ENCODE measurements at regions of chr7 and their contacts with region 1.

Region 1: GRCh38 chr7:44885394-44886317 is at the start of gene PURB:
- DNase-seq: peak; percentile 97 to 98
- H3K4me3 ChIP-seq: peak within 1 kb of the TSS; percentile 77
- H3K27ac ChIP-seq: peak within 1 kb of the TSS; percentile 96
- H3K4me1 ChIP-seq: peaks cover 44% of the 10 kb centered on the region
- H3K27me3 ChIP-seq: no peaks in the 10 kb centered on the region
- CTCF ChIP-seq: no peak
- total RNA-seq, gene PURB: 33.1 and 38.2 TPM in 2 replicates

Region 2: GRCh38 chr7:44914992-44915607 is 29.4 kb after region 1 on chr7:
- CTCF ChIA-PET with region 1: no interaction called
- POLR2A ChIA-PET with region 1: interaction called, 17 read pairs
- intact Hi-C with region 1: loop called (anchors 1 kb)
- DNase-seq: no peak
- H3K4me3 ChIP-seq: no peak overlapping the region
- H3K27ac ChIP-seq: no peak overlapping the region
- H3K4me1 ChIP-seq: peaks cover 23% of the 10 kb centered on the region
- H3K27me3 ChIP-seq: no peaks in the 10 kb centered on the region
- CTCF ChIP-seq: no peak

Region 3: DNA sequence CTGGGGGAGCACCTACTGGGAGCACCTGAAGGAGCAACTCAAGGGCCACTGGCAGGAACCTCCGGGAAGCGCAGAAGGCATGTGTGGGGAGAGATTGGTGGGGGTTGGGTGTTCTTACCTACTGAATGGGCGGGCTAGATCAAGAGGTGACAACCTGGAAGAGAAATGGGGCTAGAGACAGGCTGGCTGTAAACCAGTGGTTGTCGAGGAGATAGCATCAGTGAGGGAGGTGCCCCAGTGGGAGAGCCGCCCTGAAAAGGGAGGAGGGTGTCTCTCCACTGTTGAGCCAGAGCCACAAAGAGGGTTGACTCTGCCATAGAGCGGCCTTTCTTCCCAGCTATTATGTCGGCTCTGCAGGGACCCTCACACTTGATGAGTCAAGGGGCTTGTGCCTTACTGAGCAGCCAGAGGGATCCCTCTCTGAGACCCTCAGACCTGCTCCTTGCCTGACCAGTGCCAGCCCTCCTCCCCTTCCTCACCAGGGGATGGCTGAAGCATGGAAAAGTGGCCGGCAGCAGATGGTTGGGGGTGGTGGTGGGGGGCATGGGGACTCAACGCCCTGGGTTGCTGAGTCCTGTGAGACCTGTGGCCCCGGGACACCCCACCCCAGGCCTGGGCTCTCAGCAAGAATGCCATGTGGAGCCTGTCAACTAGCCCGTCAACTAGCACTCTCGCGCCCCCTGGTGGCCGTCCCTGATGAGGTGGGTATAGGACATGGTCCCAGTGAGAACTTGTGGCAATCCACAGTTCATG is 36.1 kb after region 1 on chr7:
- CTCF ChIA-PET with region 1: no interaction called
- POLR2A ChIA-PET with region 1: interaction called, 17 read pairs
- intact Hi-C with region 1: no loop called
- DNase-seq: peak; percentile 61 to 82
- H3K4me3 ChIP-seq: no peak overlapping the region
- H3K27ac ChIP-seq: no peak overlapping the region
- H3K4me1 ChIP-seq: no peaks in the 10 kb centered on the region
- H3K27me3 ChIP-seq: no peaks in the 10 kb centered on the region
- CTCF ChIP-seq: peak; percentile 99

Region 4: DNA sequence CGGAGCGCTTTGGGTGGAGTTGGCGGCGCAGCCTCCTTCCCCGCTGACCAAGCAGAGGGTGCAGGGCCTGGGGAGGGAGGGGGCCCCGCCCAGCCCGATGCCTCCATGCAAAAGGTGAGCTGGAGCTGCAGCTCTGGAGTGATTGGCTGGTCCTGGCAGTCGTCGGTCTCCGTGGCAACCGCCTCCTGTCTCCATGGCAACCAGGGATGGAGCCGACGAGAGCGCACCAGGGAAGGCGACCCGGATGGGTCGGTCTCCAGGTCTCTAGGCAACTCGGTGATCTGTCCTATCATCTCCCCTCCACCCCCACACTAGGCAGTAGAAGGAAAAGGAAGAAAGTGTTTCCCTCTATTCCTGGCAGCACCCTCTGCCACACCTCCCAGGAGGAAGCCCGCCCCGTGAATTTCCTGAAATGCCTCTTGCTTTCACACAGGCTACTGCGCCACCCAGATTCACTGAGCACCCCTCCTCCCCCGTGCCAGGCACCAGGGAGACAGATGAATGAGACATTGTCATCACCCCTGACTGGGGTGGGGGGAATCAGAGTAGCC is 203.8 kb after region 1 on chr7:
- CTCF ChIA-PET with region 1: no interaction called
- POLR2A ChIA-PET with region 1: interaction called, 12 read pairs
- intact Hi-C with region 1: no loop called
- DNase-seq: peak in 1 of 2 experiments; percentile 47
- H3K4me3 ChIP-seq: no peak overlapping the region
- H3K27ac ChIP-seq: no peak overlapping the region
- H3K4me1 ChIP-seq: peaks cover 21% of the 10 kb centered on the region
- H3K27me3 ChIP-seq: no peaks in the 10 kb centered on the region
- CTCF ChIP-seq: no peak

Region 5: GRCh38 chr7:45111298-45112223 is 225.9 kb after region 1 on chr7 and contains the start of gene TBRG4:
- CTCF ChIA-PET with region 1: no interaction called
- POLR2A ChIA-PET with region 1: no interaction called
- intact Hi-C with region 1: loop called (anchors 1 kb)
- DNase-seq: peak; percentile 92 to 95
- H3K4me3 ChIP-seq: peak within 1 kb of the TSS; percentile 68
- H3K27ac ChIP-seq: peak within 1 kb of the TSS; percentile 82
- H3K4me1 ChIP-seq: peaks cover 25% of the 10 kb centered on the region
- H3K27me3 ChIP-seq: peaks cover 13% of the 10 kb centered on the region
- CTCF ChIP-seq: peak; percentile 67; the same call in 1 of the 2 replicates
- total RNA-seq, gene TBRG4: 117 and 120 TPM in 2 replicates

Region 6: GRCh38 chr7:45122975-45123860 is 237.6 kb after region 1 on chr7:
- CTCF ChIA-PET with region 1: no interaction called
- POLR2A ChIA-PET with region 1: no interaction called
- intact Hi-C with region 1: no loop called
- DNase-seq: no peak
- H3K4me3 ChIP-seq: no peak overlapping the region
- H3K27ac ChIP-seq: no peak overlapping the region
- H3K4me1 ChIP-seq: no peaks in the 10 kb centered on the region
- H3K27me3 ChIP-seq: no peaks in the 10 kb centered on the region
- CTCF ChIP-seq: no peak